Gastrocnemius medialis (tissue), 4 donors: ENCODE measurements at regions of chr10 and their contacts with region 1.

Region 1: DNA sequence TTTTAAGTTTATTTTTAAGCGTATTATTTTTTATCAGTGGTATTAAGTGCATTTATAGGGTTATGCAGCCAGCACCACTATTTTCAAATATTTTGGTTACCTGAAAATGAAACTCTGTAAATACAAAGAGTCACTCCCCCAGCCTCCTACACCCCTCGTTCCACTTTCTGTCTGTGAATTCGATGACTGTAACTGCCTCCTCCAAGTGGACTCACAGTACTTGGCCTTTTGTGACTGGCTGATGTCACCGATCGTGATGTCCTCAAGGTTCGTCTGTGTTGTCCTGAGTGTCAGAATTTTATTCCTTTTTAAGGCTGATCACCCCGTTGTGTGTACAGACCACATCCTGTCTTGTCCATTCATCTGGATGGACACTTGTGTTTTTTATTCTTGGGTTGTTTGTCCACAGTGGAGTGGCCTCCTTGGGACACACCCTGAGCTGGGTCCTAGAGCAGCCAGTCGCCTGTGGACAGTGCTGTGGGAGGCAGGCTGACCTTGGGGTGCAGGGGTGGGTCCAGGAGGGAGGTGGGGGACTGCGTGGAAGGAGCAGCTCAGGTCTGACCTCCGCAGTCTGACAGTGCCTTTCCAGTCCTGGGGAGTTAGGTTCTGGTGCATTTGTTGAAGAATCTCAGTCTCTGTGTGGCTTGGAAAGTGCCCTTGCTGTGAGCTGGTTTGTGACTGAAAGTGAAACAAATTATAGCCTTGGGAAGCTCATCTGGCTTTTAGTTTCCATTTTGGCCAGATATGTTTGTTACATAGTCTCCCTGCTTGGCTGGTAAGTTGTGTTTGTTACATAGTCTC is 6.9 kb downstream of the MTG1 start:
- DNase-seq: peak in 1 of 2 donors; percentile 3
- ATAC-seq: no peak
- H3K4me3 ChIP-seq: no peak overlapping the region
- H3K27ac ChIP-seq: no peak overlapping the region
- H3K4me1 ChIP-seq: no peaks in the 10 kb centered on the region
- H3K27me3 ChIP-seq: no peaks in the 10 kb centered on the region
- CTCF ChIP-seq: no peak
- POLR2A ChIP-seq: no peak

Region 2: DNA sequence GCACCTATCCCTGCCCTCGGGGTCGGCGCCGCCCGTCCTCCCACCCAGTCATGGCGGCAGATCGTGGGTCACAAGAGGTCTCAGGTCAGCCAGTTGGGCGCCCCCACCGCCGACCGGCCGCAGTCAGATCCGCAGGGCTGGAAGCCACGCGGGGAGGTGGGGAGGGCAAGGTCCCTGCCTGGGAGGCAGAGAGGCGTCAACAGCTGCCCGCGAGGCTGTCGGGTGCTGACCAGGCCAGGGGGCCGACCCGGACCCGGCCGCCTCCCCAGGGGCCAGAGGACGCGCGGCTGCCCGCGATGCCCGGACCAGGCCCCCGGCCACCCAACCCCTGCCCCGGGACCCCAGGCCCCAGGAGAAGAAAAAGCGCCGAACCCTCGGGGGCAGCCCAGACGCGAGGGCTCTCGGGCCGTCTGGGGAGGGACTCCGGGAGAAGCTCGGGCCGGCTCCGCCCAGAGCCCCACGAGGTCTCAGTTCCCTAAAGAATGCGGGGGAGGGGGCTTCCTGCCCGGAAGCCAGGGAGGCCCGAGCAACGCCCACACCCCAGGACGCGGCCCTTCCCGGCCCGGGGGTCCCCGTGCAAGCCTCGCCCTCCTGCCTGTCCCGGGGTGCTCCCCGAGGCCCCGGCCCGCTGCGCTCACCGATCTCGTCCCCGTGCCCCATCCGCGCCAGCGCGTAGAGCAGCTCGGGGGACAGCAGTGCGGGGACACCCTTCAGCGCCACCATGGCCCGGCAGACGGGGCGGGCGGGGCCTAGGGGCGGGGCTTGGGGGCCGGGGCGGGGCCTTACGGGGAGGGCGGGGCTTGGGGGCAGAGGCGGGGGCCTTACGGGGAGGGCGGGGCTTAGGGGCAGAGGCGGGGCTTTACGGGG is 43.3 kb before region 1 on chr10 and contains the start of gene FUOM:
- in situ Hi-C with region 1: no loop called
- intact Hi-C with region 1: loop called (anchors 1 kb)
- DNase-seq: peak in 1 of 2 donors; percentile 33
- ATAC-seq: peak; percentile 51 to 73
- H3K4me3 ChIP-seq: peak within 1 kb of the TSS; percentile 62 to 78 (median 66)
- H3K27ac ChIP-seq: peak within 1 kb of the TSS; percentile 34 to 61 (median 51)
- H3K4me1 ChIP-seq: peaks cover 4 to 8% of the 10 kb centered on the region in 2 donors
- H3K27me3 ChIP-seq: peaks cover 4 to 21% (median 13%) of the 10 kb centered on the region in 3 donors
- CTCF ChIP-seq: no peak
- POLR2A ChIP-seq: no peak
- total RNA-seq, gene FUOM: 3.2 to 8.9 (median 5.6) TPM